Breast epithelium (tissue), 4 donors: ENCODE measurements at regions of chr12 and their contacts with region 1.

Region 1: DNA sequence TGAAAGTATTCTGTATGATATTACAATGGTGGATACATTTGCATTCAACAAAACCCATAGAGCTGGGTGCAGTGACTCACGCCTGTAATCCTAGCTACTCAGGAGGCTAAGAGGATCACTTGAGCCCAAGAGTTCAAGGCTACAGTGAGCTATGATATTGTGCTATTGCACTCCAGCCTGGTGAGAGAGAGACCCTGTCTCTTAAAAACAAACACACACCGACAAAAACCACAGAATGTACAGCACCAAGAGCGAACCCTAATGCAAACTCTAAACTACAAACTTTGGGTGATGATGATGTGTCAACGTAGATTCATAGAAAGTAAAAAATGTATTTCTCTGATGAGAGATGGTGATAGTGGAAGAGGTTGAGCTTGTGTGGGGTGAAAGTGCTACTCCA is 8.6 kb downstream of the CAPRIN2 start:
- DNase-seq: no peak
- H3K4me3 ChIP-seq: no peak overlapping the region
- H3K27ac ChIP-seq: no peak overlapping the region
- H3K4me1 ChIP-seq: no peaks in the 10 kb centered on the region
- H3K27me3 ChIP-seq: no peaks in the 10 kb centered on the region
- CTCF ChIP-seq: no peak
- POLR2A ChIP-seq: no peak

Region 2: DNA sequence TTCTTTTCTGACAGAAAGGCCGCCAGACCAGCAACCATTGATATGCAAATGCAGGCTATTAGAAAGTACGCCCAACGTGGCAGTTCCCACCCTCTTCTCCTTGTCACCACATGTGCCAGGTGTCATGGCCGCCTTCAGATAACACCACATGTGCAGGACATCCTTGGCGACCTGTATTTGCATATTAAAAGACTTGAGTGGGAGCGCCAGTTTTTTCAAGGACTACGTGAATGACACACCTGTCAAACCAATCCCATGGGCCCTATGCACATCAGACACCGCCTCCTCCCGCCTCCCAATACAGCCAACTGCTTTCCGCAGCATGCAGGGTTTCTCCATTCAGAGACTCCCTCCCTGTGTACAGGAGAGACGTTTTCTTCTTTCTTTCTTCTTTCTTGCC is 1915.7 kb before region 1 on chr12:
- intact Hi-C with region 1: no loop called
- DNase-seq: no peak
- H3K4me3 ChIP-seq: no peak overlapping the region
- H3K27ac ChIP-seq: no peak overlapping the region
- H3K4me1 ChIP-seq: no peaks in the 10 kb centered on the region
- H3K27me3 ChIP-seq: no peaks in the 10 kb centered on the region
- CTCF ChIP-seq: no peak
- POLR2A ChIP-seq: no peak

Region 3: GRCh38 chr12:30304528-30304927 is 441.7 kb before region 1 on chr12:
- intact Hi-C with region 1: loop called (anchors 5 kb)
- DNase-seq: no peak
- H3K4me3 ChIP-seq: no peak overlapping the region
- H3K27ac ChIP-seq: no peak overlapping the region
- H3K4me1 ChIP-seq: no peaks in the 10 kb centered on the region
- H3K27me3 ChIP-seq: no peaks in the 10 kb centered on the region
- CTCF ChIP-seq: no peak
- POLR2A ChIP-seq: no peak